Caco-2 (cell line): ENCODE measurements at regions of chr10 and their contacts with region 1.

Region 1: GRCh38 chr10:58585435-58585834 is 72.8 kb downstream of the BICC1 start:
- DNase-seq: no peak
- H3K4me3 ChIP-seq: no peak overlapping the region
- H3K4me3 Mint-ChIP-seq: no peak overlapping the region
- H3K27ac Mint-ChIP-seq: no peak overlapping the region
- H3K4me1 ChIP-seq: peaks cover 12% of the 10 kb centered on the region
- H3K4me1 Mint-ChIP-seq: peaks cover 28% of the 10 kb centered on the region
- H3K27me3 ChIP-seq: no peaks in the 10 kb centered on the region
- H3K27me3 Mint-ChIP-seq: no peaks in the 10 kb centered on the region
- CTCF ChIP-seq: no peak

Region 2: GRCh38 chr10:58599927-58600553 is 14.6 kb after region 1 on chr10:
- CTCF ChIA-PET with region 1: no interaction called
- POLR2A ChIA-PET with region 1: no interaction called
- intact Hi-C with region 1: loop called (anchors 2 kb)
- DNase-seq: no peak
- H3K4me3 ChIP-seq: no peak overlapping the region
- H3K4me3 Mint-ChIP-seq: no peak overlapping the region
- H3K27ac Mint-ChIP-seq: no peak overlapping the region
- H3K4me1 ChIP-seq: peaks cover 23% of the 10 kb centered on the region
- H3K4me1 Mint-ChIP-seq: peaks cover 22% of the 10 kb centered on the region
- H3K27me3 ChIP-seq: no peaks in the 10 kb centered on the region
- H3K27me3 Mint-ChIP-seq: no peaks in the 10 kb centered on the region
- CTCF ChIP-seq: no peak